Left ventricle myocardium inferior (tissue), 1 donor: ENCODE measurements at regions of chr11 and their contacts with region 1.

Region 1: GRCh38 chr11:67507864-67508485 is at the start of gene CDK2AP2:
- DNase-seq: peak; percentile 100
- H3K4me3 ChIP-seq: peak within 1 kb of the TSS; percentile 97
- H3K27ac ChIP-seq: peak within 1 kb of the TSS; percentile 100
- H3K4me1 ChIP-seq: peaks cover 58% of the 10 kb centered on the region
- H3K27me3 ChIP-seq: peaks cover 11% of the 10 kb centered on the region
- CTCF ChIP-seq: no peak
- total RNA-seq, gene CDK2AP2: 66.1 TPM

Region 2: GRCh38 chr11:67391304-67392132 is 116.5 kb before region 1 on chr11 and contains the start of gene RAD9A:
- intact Hi-C with region 1: loop called (anchors 10 kb)
- DNase-seq: peak; percentile 97
- H3K4me3 ChIP-seq: peak within 1 kb of the TSS; percentile 92
- H3K27ac ChIP-seq: peak within 1 kb of the TSS; percentile 89
- H3K4me1 ChIP-seq: peaks cover 24% of the 10 kb centered on the region
- H3K27me3 ChIP-seq: no peaks in the 10 kb centered on the region
- CTCF ChIP-seq: no peak
- total RNA-seq, gene RAD9A: 7.0 TPM